ENCODE measurements at regions of chr1 and their contacts with region 1.

Region 1: GRCh38 chr1:210407207-210407886 is 78.6 kb downstream of the HHAT start:
- DNase-seq: peak; percentile 48 to 78
- H3K4me3 ChIP-seq: no peak overlapping the region
- H3K27ac ChIP-seq: no peak overlapping the region
- H3K4me1 ChIP-seq: no peaks in the 10 kb centered on the region
- H3K27me3 ChIP-seq: no peaks in the 10 kb centered on the region
- CTCF ChIP-seq: peak; percentile 95

Region 2: GRCh38 chr1:209627732-209628196 is 779.6 kb before region 1 on chr1:
- CTCF ChIA-PET with region 1: no interaction called
- POLR2A ChIA-PET with region 1: no interaction called
- intact Hi-C with region 1: no loop called
- DNase-seq: peak; percentile 45 to 53
- H3K4me3 ChIP-seq: no peak overlapping the region
- H3K27ac ChIP-seq: no peak overlapping the region
- H3K4me1 ChIP-seq: no peaks in the 10 kb centered on the region
- H3K27me3 ChIP-seq: no peaks in the 10 kb centered on the region
- CTCF ChIP-seq: peak; percentile 93

Region 3: GRCh38 chr1:210233216-210234020 is 173.9 kb before region 1 on chr1:
- CTCF ChIA-PET with region 1: no interaction called
- POLR2A ChIA-PET with region 1: no interaction called
- intact Hi-C with region 1: no loop called
- DNase-seq: peak; percentile 75 to 77
- H3K4me3 ChIP-seq: peak overlapping the region; percentile 96
- H3K27ac ChIP-seq: peak overlapping the region; percentile 41
- H3K4me1 ChIP-seq: peaks cover 31% of the 10 kb centered on the region
- H3K27me3 ChIP-seq: no peaks in the 10 kb centered on the region
- CTCF ChIP-seq: no peak

Region 4: DNA sequence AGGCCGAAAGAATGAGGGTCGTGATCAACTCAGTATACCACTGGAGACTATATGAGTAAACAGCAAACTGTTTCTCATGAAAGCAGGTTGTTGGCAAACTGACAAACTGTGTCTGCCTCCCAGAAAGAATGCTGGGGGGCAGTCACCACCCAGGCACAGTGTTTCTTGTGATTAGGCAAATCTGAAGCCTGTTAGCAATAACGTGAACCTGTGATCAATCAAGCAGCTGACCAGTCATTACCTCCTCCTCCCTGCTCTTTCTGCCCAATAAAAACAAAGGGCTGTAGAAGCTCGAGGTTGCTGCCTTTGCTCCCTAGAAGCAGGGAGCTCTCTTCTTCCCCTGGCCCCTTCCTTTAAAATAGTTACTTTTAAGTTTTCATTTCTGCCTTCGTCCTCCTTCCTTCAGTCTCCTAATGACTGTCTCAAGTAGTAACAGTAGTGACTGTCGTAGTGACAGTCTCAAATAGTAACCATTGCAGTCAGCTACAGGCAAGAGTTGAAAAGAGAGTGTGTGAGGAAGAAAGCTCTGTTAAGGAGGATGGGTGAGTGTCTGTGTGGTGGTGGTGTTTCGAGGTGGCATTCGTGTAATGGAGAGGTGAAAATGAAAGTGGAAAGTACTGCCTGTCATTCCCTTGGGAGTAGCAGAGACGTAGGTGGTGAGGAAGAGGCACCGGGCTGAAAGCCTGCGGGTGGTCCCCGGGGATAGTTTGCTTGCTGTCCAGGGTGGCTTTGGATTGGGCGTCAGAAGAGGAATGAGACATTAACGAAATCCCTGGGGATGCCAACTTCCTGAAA is 64.2 kb before region 1 on chr1:
- CTCF ChIA-PET with region 1: no interaction called
- POLR2A ChIA-PET with region 1: no interaction called
- intact Hi-C with region 1: no loop called
- DNase-seq: no peak
- H3K4me3 ChIP-seq: no peak overlapping the region
- H3K27ac ChIP-seq: no peak overlapping the region
- H3K4me1 ChIP-seq: no peaks in the 10 kb centered on the region
- H3K27me3 ChIP-seq: no peaks in the 10 kb centered on the region
- CTCF ChIP-seq: no peak

Region 5: DNA sequence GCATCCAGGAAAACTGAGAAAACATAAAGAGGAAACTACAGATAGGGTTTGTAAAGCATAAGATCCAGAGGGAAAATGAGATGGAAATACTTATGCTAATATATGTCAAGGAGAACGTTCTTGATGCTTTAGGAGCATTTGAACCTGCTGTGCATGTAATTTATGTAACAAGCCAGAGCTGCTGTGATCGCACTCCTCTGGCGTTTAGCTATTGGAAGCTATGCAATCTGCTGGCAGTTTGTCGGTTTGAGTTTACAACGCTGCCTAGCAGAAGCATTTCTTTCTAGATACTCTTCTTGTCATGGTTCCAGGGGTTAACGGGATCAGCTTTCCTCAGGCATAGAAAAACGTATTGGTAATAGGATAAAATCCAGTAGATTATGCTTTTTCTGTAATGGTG is 543.9 kb after region 1 on chr1:
- CTCF ChIA-PET with region 1: no interaction called
- POLR2A ChIA-PET with region 1: no interaction called
- intact Hi-C with region 1: loop called (anchors 1 kb)
- DNase-seq: no peak
- H3K4me3 ChIP-seq: no peak overlapping the region
- H3K27ac ChIP-seq: no peak overlapping the region
- H3K4me1 ChIP-seq: no peaks in the 10 kb centered on the region
- H3K27me3 ChIP-seq: peaks cover 4% of the 10 kb centered on the region; the same call in 1 of the 2 replicates
- CTCF ChIP-seq: no peak

Measured in PC-9 (cell line).